B cell (primary cell): ENCODE measurements at regions of chr7 and their contacts with region 1.

Region 1: GRCh38 chr7:22488643-22489462 is 11.1 kb downstream of the STEAP1B start:
- DNase-seq: peak; percentile 79
- ATAC-seq: peak; percentile 72
- H3K4me3 ChIP-seq: no peak overlapping the region
- H3K4me3 Mint-ChIP-seq: no peak overlapping the region
- H3K27ac ChIP-seq: no peak overlapping the region
- H3K27ac Mint-ChIP-seq: no peak overlapping the region
- H3K4me1 ChIP-seq: no peaks in the 10 kb centered on the region
- H3K4me1 Mint-ChIP-seq: peaks cover 5% of the 10 kb centered on the region
- H3K27me3 ChIP-seq: no peaks in the 10 kb centered on the region
- H3K27me3 Mint-ChIP-seq: no peaks in the 10 kb centered on the region
- CTCF ChIP-seq: peak; percentile 92

Region 2: GRCh38 chr7:21338728-21339164 is 1150.1 kb before region 1 on chr7:
- CTCF ChIA-PET with region 1: no interaction called
- POLR2A ChIA-PET with region 1: interaction called, 11 read pairs
- intact Hi-C with region 1: no loop called
- DNase-seq: no peak
- ATAC-seq: no peak
- H3K4me3 ChIP-seq: no peak overlapping the region
- H3K4me3 Mint-ChIP-seq: no peak overlapping the region
- H3K27ac ChIP-seq: no peak overlapping the region
- H3K27ac Mint-ChIP-seq: no peak overlapping the region
- H3K4me1 ChIP-seq: no peaks in the 10 kb centered on the region
- H3K4me1 Mint-ChIP-seq: peaks cover 14% of the 10 kb centered on the region
- H3K27me3 ChIP-seq: no peaks in the 10 kb centered on the region
- H3K27me3 Mint-ChIP-seq: no peaks in the 10 kb centered on the region
- CTCF ChIP-seq: no peak

Region 3: DNA sequence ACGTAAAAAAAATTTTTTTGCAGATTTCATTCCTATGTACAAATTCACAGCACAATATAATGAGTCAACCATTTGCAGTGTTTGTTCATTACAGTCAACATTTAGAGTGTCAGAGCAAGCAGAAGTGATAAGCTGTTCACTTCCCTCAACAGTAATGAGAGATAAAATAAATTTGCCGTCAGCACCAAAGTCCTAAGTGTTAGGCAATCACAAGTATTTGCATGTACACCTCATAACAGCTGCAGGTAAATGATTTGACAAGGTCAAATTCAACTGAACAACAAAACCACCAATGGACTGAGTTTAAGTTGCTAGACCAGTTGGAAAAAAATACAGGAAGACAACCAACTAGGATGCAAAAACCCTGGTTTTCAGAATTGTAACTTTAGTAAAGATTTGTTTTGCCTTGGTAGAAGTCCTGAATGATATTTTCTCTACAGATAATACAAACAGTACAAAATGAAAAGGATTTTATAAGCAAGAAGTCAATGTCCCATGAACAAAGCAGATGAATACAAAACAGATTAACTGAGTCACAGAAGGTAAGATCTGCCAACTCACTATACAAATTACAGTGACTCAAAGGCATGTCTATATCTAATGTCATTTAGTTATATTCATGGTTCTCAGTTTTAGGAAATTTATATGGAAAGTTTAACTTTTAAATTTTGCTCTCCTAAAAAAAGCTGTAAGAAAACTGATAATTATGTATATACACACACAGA is 142.3 kb before region 1 on chr7:
- CTCF ChIA-PET with region 1: no interaction called
- POLR2A ChIA-PET with region 1: no interaction called
- intact Hi-C with region 1: no loop called
- DNase-seq: no peak
- ATAC-seq: no peak
- H3K4me3 ChIP-seq: no peak overlapping the region
- H3K4me3 Mint-ChIP-seq: no peak overlapping the region
- H3K27ac ChIP-seq: no peak overlapping the region
- H3K27ac Mint-ChIP-seq: no peak overlapping the region
- H3K4me1 ChIP-seq: no peaks in the 10 kb centered on the region
- H3K4me1 Mint-ChIP-seq: peaks cover 16% of the 10 kb centered on the region
- H3K27me3 ChIP-seq: no peaks in the 10 kb centered on the region
- H3K27me3 Mint-ChIP-seq: no peaks in the 10 kb centered on the region
- CTCF ChIP-seq: no peak

Region 4: GRCh38 chr7:22426463-22427121 is 62.3 kb before region 1 on chr7:
- CTCF ChIA-PET with region 1: no interaction called
- POLR2A ChIA-PET with region 1: no interaction called
- intact Hi-C with region 1: no loop called
- DNase-seq: peak; percentile 48
- ATAC-seq: no peak
- H3K4me3 ChIP-seq: no peak overlapping the region
- H3K4me3 Mint-ChIP-seq: peak overlapping the region; percentile 32
- H3K27ac ChIP-seq: peak overlapping the region; percentile 4 to 39
- H3K27ac Mint-ChIP-seq: peak overlapping the region; percentile 53
- H3K4me1 ChIP-seq: peaks cover 25 to 27% of the 10 kb centered on the region in 2 donors
- H3K4me1 Mint-ChIP-seq: peaks cover 27% of the 10 kb centered on the region
- H3K27me3 ChIP-seq: no peaks in the 10 kb centered on the region
- H3K27me3 Mint-ChIP-seq: no peaks in the 10 kb centered on the region
- CTCF ChIP-seq: no peak

Region 5: GRCh38 chr7:22667562-22668239 is 178.8 kb after region 1 on chr7:
- CTCF ChIA-PET with region 1: no interaction called
- POLR2A ChIA-PET with region 1: no interaction called
- intact Hi-C with region 1: no loop called
- DNase-seq: no peak
- ATAC-seq: no peak
- H3K4me3 ChIP-seq: no peak overlapping the region
- H3K4me3 Mint-ChIP-seq: no peak overlapping the region
- H3K27ac ChIP-seq: no peak overlapping the region
- H3K27ac Mint-ChIP-seq: no peak overlapping the region
- H3K4me1 ChIP-seq: peaks cover 50 to 56% of the 10 kb centered on the region in 2 donors
- H3K4me1 Mint-ChIP-seq: peaks cover 58% of the 10 kb centered on the region
- H3K27me3 ChIP-seq: no peaks in the 10 kb centered on the region
- H3K27me3 Mint-ChIP-seq: no peaks in the 10 kb centered on the region
- CTCF ChIP-seq: no peak

Region 6: GRCh38 chr7:23093546-23093945 is 604.7 kb after region 1 on chr7:
- CTCF ChIA-PET with region 1: no interaction called
- POLR2A ChIA-PET with region 1: no interaction called
- intact Hi-C with region 1: no loop called
- DNase-seq: no peak
- ATAC-seq: no peak
- H3K4me3 ChIP-seq: no peak overlapping the region
- H3K4me3 Mint-ChIP-seq: no peak overlapping the region
- H3K27ac ChIP-seq: no peak overlapping the region
- H3K27ac Mint-ChIP-seq: no peak overlapping the region
- H3K4me1 ChIP-seq: no peaks in the 10 kb centered on the region
- H3K4me1 Mint-ChIP-seq: no peaks in the 10 kb centered on the region
- H3K27me3 ChIP-seq: peaks cover 0 to 3% (median 0%) of the 10 kb centered on the region in 4 experiments
- H3K27me3 Mint-ChIP-seq: peaks cover 26% of the 10 kb centered on the region
- CTCF ChIP-seq: no peak